ENCODE measurements at regions of chr19 and their contacts with region 1.

Region 1: DNA sequence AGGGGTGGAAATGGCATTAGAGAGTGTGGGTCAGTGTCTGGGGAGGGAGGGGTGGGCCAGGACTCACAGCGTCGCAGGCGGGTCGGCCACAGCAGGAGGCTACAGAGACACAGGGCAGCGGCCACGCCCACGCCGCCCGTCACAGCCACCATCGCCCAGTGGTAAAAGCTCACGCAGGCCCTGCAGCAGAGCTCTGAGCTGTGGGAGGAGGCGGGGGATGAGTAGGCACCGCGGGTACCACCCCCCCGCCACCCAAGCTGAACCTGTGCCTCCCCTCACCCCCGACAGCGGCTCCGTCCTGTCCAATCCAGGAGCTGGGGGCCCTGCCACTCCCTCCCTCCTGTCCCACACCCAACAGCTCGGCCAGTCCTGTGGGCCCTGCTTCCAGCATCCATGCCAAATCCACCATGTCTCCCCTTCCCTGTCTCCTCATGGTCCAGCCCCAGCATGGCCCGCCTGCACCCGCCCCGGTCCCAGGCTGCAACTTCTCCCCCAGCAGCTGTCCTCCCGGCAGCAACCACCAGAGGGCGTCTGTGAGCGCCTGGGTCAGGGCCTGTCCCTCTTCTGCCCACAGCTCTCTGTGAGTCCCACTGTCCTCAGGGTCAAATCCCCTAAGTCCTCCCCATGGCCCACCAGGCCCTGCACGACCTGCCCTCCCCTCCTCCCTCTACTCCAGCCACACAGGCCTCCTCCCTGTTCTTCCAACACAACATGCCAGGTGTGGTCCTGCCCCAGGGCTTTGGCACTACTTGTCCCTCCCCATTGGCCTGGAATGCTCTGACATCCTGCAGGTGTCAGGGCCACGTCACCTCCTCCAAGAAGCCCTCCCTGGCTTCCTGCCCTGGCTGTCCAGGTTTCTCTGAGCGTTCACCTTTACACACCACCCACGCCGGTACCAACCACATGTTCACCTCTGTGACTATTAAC is 6.0 kb downstream of the TEKTIP1 start:
- DNase-seq: peak; percentile 88
- H3K4me3 Mint-ChIP-seq: no peak overlapping the region
- H3K27ac Mint-ChIP-seq: peak overlapping the region; percentile 62
- H3K4me1 Mint-ChIP-seq: peaks cover 10% of the 10 kb centered on the region
- H3K27me3 Mint-ChIP-seq: no peaks in the 10 kb centered on the region

Region 2: DNA sequence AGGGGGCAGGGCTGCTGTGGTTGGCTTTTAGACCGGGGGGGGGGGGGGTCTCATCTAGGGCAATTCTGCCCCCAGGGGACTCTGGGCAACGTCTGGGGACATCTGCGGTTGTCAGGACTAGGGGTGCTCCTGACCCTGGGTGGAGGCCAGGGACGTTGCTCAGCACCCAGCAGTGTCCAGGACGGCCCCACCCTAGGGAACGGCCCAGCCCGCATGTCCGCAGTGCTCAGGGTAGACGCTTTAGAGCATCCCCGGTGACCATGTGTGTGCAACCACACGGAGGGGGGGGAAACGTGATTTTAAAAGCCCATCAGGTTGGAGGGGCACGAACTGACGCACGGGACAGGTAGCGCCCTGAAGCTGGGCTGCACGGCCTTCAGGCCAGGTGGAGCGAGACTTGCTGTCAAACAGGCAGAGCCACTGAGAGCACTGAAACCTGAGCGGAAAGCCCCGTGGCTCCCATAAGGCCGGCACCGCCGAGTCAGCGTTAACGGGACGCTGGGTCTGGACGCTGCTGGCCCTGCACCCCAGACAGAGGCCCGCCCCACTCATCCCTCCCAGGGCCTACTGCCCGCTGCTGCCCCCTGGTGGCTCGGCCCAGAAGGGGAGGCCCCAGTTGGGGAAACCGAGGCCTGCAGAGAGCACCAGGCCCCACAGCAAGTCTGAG is 73.3 kb after region 1 on chr19:
- CTCF ChIA-PET with region 1: interaction called, 4 read pairs
- intact Hi-C with region 1: loop called (anchors 2 kb)
- DNase-seq: peak; percentile 55
- H3K4me3 Mint-ChIP-seq: no peak overlapping the region
- H3K27ac Mint-ChIP-seq: no peak overlapping the region
- H3K4me1 Mint-ChIP-seq: peaks cover 13% of the 10 kb centered on the region
- H3K27me3 Mint-ChIP-seq: no peaks in the 10 kb centered on the region

Region 3: DNA sequence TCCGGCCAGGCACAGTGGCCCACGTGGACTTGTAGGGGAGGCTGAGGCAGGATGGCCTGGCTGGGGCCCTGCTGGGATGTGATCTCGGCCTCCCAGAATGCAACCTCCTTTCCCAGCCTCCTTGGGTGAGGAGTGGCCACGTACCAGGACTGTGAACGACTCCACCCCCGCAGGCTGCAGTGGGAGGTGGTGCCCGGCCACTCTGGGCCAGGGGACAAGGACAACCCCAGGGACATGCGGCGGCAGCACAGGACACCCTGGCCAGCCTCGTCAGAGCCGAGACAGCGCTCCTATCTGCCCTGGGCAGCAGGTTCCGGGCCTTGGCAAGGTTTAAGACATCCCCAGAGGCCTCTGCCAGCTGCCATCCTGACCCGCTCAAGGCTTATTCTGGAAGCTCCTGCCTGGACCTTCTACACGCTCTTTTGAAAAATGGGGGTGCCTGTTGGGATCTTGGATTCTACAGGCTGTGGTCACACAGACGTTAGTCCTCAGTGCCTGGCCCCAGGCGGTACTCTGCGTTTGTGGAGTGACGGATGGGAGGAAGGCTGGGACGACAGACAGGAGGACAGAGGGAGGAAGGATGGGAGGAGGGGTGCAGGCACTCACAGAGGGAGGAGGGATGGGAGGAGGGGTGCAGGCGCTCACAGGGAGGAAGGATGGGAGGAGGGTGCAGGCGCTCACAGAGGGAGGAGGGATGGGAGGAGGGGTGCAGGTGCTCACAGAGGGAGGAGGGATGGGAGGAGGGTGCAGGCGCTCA is 101.5 kb after region 1 on chr19:
- CTCF ChIA-PET with region 1: no interaction called
- intact Hi-C with region 1: no loop called
- DNase-seq: no peak
- H3K4me3 Mint-ChIP-seq: no peak overlapping the region
- H3K27ac Mint-ChIP-seq: no peak overlapping the region
- H3K4me1 Mint-ChIP-seq: no peaks in the 10 kb centered on the region
- H3K27me3 Mint-ChIP-seq: no peaks in the 10 kb centered on the region

Region 4: GRCh38 chr19:3710265-3710812 is 165.3 kb after region 1 on chr19:
- CTCF ChIA-PET with region 1: no interaction called
- intact Hi-C with region 1: loop called (anchors 1 kb)
- DNase-seq: no peak
- H3K4me3 Mint-ChIP-seq: no peak overlapping the region
- H3K27ac Mint-ChIP-seq: no peak overlapping the region
- H3K4me1 Mint-ChIP-seq: peaks cover 2% of the 10 kb centered on the region
- H3K27me3 Mint-ChIP-seq: peaks cover 2% of the 10 kb centered on the region

Measured in activated naive CD4-positive, alpha-beta T cell treated with anti-CD3 and anti-CD28 coated beads for 36 hours (primary cell).